Left colon (tissue), 2 donors: ENCODE measurements at regions of chr3 and their contacts with region 1.

Region 1: GRCh38 chr3:171566803-171567422 is 106.7 kb upstream of the TNIK start:
- DNase-seq: no peak
- ATAC-seq: peak; percentile 61

Region 2: GRCh38 chr3:170961616-170962400 is 605.1 kb before region 1 on chr3:
- intact Hi-C with region 1: loop called (anchors 5 to 10 kb)
- DNase-seq: no peak
- ATAC-seq: peak; percentile 63

Region 3: GRCh38 chr3:171049861-171050444 is 517.0 kb before region 1 on chr3:
- intact Hi-C with region 1: loop called in 1 of 2 experiments (anchors 5 kb)
- DNase-seq: peak; percentile 26 to 35
- ATAC-seq: peak; percentile 80

Region 4: GRCh38 chr3:171162986-171163723 is 403.8 kb before region 1 on chr3:
- intact Hi-C with region 1: loop called in 1 of 2 experiments (anchors 10 kb)
- DNase-seq: no peak
- ATAC-seq: peak; percentile 20